Aorta (tissue), 5 donors: ENCODE measurements at regions of chr5 and their contacts with region 1.

Region 1: GRCh38 chr5:1548701-1549474 is 25.1 kb upstream of the LPCAT1 start:
- DNase-seq: peak in 1 of 2 donors; percentile 55
- ATAC-seq: no peak
- H3K4me3 ChIP-seq: no peak overlapping the region
- H3K27ac ChIP-seq: no peak overlapping the region
- H3K4me1 ChIP-seq: no peaks in the 10 kb centered on the region
- H3K27me3 ChIP-seq: no peaks in the 10 kb centered on the region

Region 2: DNA sequence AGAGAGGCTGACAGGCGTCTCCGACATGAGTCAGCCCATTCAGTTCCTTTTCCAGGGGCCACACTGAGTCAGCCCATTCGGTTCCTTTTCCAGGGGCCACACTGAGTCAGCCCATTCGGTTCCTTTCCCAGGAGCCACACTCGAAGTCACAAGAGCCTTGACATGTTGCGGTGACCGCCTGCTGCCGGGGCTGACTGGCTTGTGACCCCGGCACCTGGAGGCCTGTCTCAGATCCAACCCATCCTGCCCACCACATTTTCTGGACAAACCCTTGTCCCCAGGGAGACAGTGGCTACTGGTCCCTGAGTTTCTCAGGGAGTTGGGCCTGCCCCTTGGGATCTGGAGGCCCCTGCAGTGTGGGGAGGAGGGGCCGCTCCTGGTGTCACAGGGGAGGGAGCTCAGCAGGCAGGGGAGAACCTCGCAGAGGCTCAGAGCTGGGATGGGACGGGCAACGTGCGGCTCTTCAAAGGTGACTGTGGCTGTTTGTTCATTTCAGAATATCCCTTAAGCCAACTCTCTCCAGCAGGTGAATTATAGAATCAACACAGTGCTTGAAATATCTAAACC is 15.4 kb after region 1 on chr5:
- intact Hi-C with region 1: loop called in 1 of 2 experiments (anchors 2 kb)
- DNase-seq: peak in 1 of 2 donors; percentile 88
- ATAC-seq: peak; percentile 17
- H3K4me3 ChIP-seq: no peak overlapping the region
- H3K27ac ChIP-seq: no peak overlapping the region
- H3K4me1 ChIP-seq: no peaks in the 10 kb centered on the region
- H3K27me3 ChIP-seq: no peaks in the 10 kb centered on the region

Region 3: DNA sequence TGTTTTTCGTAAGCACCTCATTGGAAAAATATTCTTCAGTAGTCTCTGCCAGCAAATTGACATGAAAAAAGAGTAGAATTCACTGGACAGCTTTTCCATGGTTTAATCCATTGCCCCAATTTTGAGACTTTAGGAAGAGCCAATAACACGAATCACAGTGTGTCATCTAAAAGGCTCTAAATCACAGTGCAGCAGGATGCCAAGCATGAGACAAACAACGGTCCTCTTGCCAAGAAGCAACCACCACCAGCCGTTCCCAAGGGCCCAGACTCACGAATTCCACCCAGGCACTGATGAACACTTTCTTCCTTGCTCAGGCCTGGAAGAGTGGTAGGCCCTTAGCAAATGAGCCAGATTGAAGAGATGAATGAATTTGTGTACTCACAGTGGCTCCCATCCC is 352.2 kb after region 1 on chr5:
- intact Hi-C with region 1: no loop called
- DNase-seq: no peak
- ATAC-seq: no peak
- H3K4me3 ChIP-seq: no peak overlapping the region
- H3K27ac ChIP-seq: no peak overlapping the region
- H3K4me1 ChIP-seq: no peaks in the 10 kb centered on the region
- H3K27me3 ChIP-seq: no peaks in the 10 kb centered on the region